ENCODE measurements at regions of chr3 and their contacts with region 1.

Region 1: GRCh38 chr3:194833511-194833910 is 147.8 kb downstream of the FAM43A start:
- DNase-seq: peak; percentile 66
- H3K4me3 ChIP-seq: no peak overlapping the region
- H3K27ac ChIP-seq: peak overlapping the region; percentile 62
- H3K4me1 ChIP-seq: peaks cover 22% of the 10 kb centered on the region
- H3K27me3 ChIP-seq: no peaks in the 10 kb centered on the region
- CTCF ChIP-seq: no peak
- POLR2A ChIP-seq: no peak

Region 2: GRCh38 chr3:194607592-194608389 is 225.7 kb before region 1 on chr3:
- CTCF ChIA-PET with region 1: no interaction called
- POLR2A ChIA-PET with region 1: no interaction called
- dilution Hi-C with region 1: no loop called
- intact Hi-C with region 1: no loop called
- DNase-seq: no peak
- H3K4me3 ChIP-seq: no peak overlapping the region
- H3K27ac ChIP-seq: no peak overlapping the region
- H3K4me1 ChIP-seq: no peaks in the 10 kb centered on the region
- H3K27me3 ChIP-seq: no peaks in the 10 kb centered on the region
- CTCF ChIP-seq: no peak
- POLR2A ChIP-seq: no peak

Region 3: DNA sequence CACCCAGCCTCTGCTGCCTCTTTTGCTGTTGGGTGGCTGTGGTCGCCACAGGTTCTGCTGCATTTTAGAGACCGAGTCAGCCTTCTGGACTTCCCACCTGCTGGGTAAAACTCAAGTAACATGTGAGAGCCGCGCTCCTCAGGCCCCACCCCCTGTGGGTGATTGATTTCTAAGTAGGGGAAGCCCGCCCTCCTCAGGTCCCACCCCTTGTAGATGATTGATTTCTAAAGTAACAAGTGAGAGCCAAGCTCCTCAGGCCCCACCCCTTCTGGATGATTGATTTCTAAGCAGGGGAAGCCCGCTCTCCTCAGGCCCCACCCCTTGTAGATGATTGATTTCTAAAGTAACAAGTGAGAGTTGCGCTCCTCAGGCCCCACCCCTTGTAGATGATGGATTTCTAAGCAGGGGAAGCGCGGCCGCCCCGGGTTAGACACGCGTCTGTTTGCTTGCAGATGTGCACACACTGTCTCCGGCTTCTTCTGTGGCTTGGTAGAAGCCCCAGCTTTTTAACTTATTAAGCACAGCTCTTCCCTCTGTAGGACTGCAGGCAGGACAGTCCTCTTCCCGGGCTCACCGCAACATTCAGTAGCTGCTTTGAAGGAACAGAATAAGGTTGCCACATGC is 64.4 kb before region 1 on chr3:
- CTCF ChIA-PET with region 1: no interaction called
- POLR2A ChIA-PET with region 1: no interaction called
- dilution Hi-C with region 1: no loop called
- intact Hi-C with region 1: loop called (anchors 1 kb)
- DNase-seq: peak; percentile 99
- H3K4me3 ChIP-seq: peak overlapping the region in 1 of 3 experiments; percentile 25
- H3K27ac ChIP-seq: no peak overlapping the region
- H3K4me1 ChIP-seq: peaks cover 24% of the 10 kb centered on the region
- H3K27me3 ChIP-seq: no peaks in the 10 kb centered on the region
- CTCF ChIP-seq: no peak
- POLR2A ChIP-seq: peak; percentile 64

Region 4: GRCh38 chr3:194814878-194815357 is 18.6 kb before region 1 on chr3:
- CTCF ChIA-PET with region 1: no interaction called
- POLR2A ChIA-PET with region 1: no interaction called
- dilution Hi-C with region 1: no loop called
- intact Hi-C with region 1: no loop called
- DNase-seq: no peak
- H3K4me3 ChIP-seq: no peak overlapping the region
- H3K27ac ChIP-seq: no peak overlapping the region
- H3K4me1 ChIP-seq: no peaks in the 10 kb centered on the region
- H3K27me3 ChIP-seq: no peaks in the 10 kb centered on the region
- CTCF ChIP-seq: no peak
- POLR2A ChIP-seq: no peak

Region 5: GRCh38 chr3:194849166-194849875 is 15.8 kb after region 1 on chr3:
- CTCF ChIA-PET with region 1: no interaction called
- POLR2A ChIA-PET with region 1: no interaction called
- dilution Hi-C with region 1: no loop called
- intact Hi-C with region 1: no loop called
- DNase-seq: no peak
- H3K4me3 ChIP-seq: no peak overlapping the region
- H3K27ac ChIP-seq: no peak overlapping the region
- H3K4me1 ChIP-seq: no peaks in the 10 kb centered on the region
- H3K27me3 ChIP-seq: no peaks in the 10 kb centered on the region
- CTCF ChIP-seq: no peak
- POLR2A ChIP-seq: no peak

Region 6: DNA sequence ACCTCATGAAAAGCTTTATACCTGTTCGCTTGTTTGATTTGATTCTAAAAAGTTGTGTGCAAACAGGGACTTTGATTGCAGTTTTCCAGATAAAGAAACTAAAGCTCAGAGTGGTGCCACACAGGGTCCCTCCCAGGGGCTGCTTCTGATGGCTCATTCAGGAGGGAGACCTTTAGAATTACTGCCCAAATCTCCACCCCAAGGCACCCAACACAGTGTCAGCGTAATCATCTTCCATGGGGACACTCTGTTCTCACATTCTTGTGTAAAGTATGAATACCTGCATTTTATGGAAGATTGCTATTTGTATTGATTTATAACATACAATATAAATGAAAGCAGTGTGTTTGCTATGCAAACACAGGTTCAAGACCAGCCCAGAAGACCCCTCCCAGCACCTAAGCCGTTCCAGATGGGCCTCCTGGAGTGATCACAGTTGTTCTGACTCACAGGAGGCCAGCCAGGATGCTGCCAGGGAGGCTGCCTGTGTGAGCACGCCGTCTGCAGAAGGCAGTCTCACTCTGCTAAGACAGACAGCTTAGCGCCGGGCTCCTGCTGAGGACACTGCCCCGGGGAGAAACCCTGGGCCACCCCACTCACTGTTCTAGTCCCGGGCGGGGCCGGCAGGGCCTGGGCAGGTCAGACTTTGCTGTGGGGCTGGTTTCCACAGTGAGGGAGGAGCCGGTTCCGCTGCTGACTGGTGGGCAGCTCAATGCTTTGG is 37.8 kb after region 1 on chr3:
- CTCF ChIA-PET with region 1: interaction called, 3 read pairs
- POLR2A ChIA-PET with region 1: no interaction called
- dilution Hi-C with region 1: no loop called
- intact Hi-C with region 1: loop called (anchors 1 kb)
- DNase-seq: peak; percentile 71
- H3K4me3 ChIP-seq: no peak overlapping the region
- H3K27ac ChIP-seq: peak overlapping the region; percentile 73
- H3K4me1 ChIP-seq: peaks cover 50% of the 10 kb centered on the region
- H3K27me3 ChIP-seq: no peaks in the 10 kb centered on the region
- CTCF ChIP-seq: no peak
- POLR2A ChIP-seq: no peak

Measured in endothelial cell of umbilical vein (primary cell).